ENCODE measurements at regions of chr2 and their contacts with region 1.

Region 1: DNA sequence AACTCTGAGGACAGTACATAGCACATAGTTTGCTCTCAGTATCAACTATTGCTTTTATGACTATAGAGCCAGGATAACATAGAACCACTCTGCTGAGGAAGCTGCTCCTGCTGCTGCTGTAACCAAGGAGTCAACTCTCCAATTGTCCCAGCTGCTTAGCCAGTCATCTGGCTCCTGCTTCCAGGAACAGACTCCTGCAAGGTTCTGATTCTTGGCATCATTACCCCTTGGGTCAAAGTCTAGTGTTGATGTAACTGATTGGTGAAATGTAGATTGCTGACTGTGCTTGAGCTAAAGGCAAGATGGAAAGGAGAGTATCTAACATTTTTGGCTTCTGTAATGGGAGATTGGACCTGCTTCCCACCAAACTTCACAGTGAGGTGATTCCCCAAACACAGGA is 261.9 kb upstream of the FSHR start:
- DNase-seq: no peak
- ATAC-seq: no peak
- H3K4me3 Mint-ChIP-seq: no peak overlapping the region
- H3K27ac Mint-ChIP-seq: no peak overlapping the region
- H3K4me1 Mint-ChIP-seq: no peaks in the 10 kb centered on the region
- H3K27me3 Mint-ChIP-seq: no peaks in the 10 kb centered on the region

Region 2: DNA sequence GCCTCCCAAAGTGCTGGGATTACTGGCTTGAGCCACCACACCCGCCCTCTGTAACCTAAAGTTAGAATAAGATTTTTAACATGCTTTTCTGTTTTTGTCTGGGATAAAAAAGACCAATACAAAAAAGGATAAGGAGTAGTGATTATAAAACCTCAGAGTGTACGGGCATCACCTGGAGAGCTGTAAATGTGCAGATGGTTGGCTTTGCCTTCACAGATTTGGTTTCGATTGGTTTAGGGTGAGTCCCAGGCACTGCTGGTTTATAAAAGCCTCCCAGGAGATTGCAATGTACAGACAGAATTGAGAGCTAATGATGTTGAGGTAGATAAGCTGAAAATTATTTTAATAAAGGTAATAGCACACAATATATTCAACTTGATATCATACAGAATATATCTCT is 27.8 kb after region 1 on chr2:
- CTCF ChIA-PET with region 1: no interaction called
- POLR2A ChIA-PET with region 1: no interaction called
- intact Hi-C with region 1: loop called in 1 of 2 experiments (anchors 2 kb)
- DNase-seq: no peak
- ATAC-seq: no peak
- H3K4me3 Mint-ChIP-seq: no peak overlapping the region
- H3K27ac Mint-ChIP-seq: no peak overlapping the region
- H3K4me1 Mint-ChIP-seq: no peaks in the 10 kb centered on the region
- H3K27me3 Mint-ChIP-seq: no peaks in the 10 kb centered on the region

Measured in activated CD4-positive, alpha-beta T cell treated with anti-CD3 and anti-CD28 coated beads for 36 hours (primary cell).